ENCODE measurements at regions of chr4 and their contacts with region 1.

Region 1: GRCh38 chr4:81214881-81215868 is at the start of gene PRKG2:
- DNase-seq: peak; percentile 39
- H3K4me3 ChIP-seq: peak within 1 kb of the TSS; percentile 39 to 50 (median 46)
- H3K27ac ChIP-seq: no peak within 1 kb of the TSS
- H3K4me1 ChIP-seq: peaks cover 12% of the 10 kb centered on the region
- H3K27me3 ChIP-seq: peaks cover 11% of the 10 kb centered on the region
- CTCF ChIP-seq: no peak
- total RNA-seq, gene PRKG2: 2.1 to 11.0 TPM

Region 2: DNA sequence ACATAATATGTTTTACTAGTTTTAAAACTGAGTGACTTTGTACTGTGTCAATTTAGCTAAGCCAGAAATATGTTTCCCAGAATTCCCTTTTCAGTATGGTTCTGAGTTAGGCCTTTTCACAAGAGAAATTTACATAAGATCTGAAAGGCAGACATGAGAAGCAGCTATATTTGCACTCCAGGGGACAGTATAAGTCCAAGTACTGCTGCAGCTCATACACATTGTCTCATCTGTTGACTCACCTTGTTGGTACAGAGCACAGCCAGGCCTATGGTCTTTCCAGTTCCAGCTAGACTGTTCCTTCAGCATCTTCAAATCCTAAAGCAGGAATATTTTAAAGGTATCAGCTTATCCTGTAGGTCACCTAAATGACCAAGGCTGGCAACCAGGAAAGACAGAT is 131.1 kb before region 1 on chr4:
- CTCF ChIA-PET with region 1: interaction called, 3 read pairs
- dilution Hi-C with region 1: no loop called
- in situ Hi-C with region 1: no loop called
- intact Hi-C with region 1: loop called (anchors 1 kb)
- DNase-seq: peak; percentile 68
- H3K4me3 ChIP-seq: no peak overlapping the region
- H3K27ac ChIP-seq: no peak overlapping the region
- H3K4me1 ChIP-seq: no peaks in the 10 kb centered on the region
- H3K27me3 ChIP-seq: no peaks in the 10 kb centered on the region
- CTCF ChIP-seq: peak; percentile 70 to 99

Measured in mammary epithelial cell (primary cell).